GM13977 (cell line): ENCODE measurements at regions of chr6 and their contacts with region 1.

Region 1: DNA sequence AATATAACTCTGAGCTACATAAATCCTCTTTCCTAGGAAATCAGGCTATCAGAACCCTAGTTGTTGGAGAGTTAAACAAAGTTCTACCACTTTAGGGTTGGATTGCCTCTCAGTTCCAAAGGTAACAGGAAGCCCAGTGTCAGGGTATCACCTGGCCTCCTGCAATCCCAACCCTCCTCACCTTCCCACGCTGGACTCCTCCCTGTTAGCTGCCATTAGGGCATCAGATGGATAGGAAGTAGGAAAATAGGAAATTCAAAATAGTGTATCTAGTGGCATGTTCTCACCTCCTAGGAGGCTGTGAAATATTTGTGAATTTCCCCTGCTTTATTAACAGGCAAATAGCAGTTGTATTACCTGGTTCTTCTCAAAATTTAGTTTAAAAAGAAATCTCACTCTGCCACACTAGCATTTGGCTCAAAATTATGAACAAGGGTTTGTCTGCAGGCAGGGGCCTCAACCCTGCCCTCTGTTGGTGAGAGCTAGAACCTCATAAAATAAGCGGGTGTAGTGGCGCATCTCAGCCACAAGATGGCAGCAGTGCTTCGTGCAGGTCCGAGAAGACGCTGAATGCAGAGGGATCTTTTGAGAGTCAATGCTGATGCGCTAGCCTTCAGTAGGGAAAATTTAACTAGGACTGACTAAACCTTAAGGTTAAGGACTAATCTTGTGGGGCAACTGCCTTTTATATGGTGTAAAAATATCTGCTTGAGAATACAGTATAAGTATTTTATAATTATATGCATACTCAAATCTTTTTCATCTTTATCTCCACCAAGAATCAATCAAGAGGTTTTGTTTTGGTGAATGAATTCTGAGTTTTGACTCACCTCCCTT is 209.8 kb upstream of the KCNQ5 start:
- DNase-seq: peak; percentile 77
- CTCF ChIP-seq: peak; percentile 100

Region 2: GRCh38 chr6:73058736-73059135 is 646.6 kb after region 1 on chr6:
- in situ Hi-C with region 1: no loop called
- DNase-seq: no peak
- CTCF ChIP-seq: no peak

Region 3: DNA sequence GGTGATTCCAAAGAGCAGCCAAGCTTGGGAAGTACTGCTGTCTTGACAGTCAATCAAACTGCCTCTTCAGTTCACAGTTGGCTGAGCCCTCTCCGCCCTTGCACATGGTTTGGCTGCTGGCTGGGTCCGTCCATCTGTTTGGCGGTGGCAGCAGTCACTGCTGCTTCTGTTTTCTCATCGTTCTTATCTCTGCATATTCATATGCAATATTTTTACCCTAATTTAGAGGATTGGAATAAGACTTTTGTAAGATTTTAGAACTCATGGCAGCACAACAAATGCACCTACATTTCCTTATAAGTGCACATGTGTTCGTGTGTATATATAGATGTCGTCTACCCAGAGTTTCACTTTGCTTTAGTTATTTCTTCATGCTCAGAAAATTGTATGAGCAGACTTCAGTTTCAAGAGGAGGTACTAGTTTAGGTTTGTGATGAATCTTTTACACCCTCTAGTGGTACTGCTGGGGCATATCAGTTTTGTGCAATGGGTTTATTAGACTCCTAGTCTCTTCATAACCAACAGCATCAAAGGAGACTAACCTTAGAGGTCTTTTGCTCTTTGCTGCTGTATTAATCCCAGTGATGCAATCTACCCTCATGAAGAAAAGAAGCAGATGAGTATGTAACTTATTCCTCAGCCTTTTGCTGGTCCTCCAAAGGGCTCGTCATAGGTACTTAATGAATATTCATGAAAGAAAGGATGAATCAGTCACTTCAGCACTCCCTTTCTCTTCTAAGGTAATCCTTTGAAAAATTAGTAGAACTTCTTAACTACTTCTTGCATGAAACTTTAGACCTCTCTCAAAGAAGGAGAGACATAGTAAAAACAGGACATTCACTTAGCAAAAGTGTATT is 768.9 kb after region 1 on chr6:
- in situ Hi-C with region 1: loop called (anchors 10 kb)
- DNase-seq: peak; percentile 62
- CTCF ChIP-seq: peak; percentile 77

Region 4: GRCh38 chr6:73339347-73339746 is 927.3 kb after region 1 on chr6:
- in situ Hi-C with region 1: loop called (anchors 25 kb)
- DNase-seq: no peak
- CTCF ChIP-seq: no peak